Activated T-helper 1 cell treated with anti-CD3 and anti-CD28 coated beads, Interleukin-12 subunit alpha, Interleukin-12 subunit beta, Interleukin-2, Interleukin-4 antibody, amounts not matched to agents 30 ng/mL and 10 ng/mL and 1 ng/mL, durations not matched to agents 14 hours and 24 hours and 36 hours (primary cell): ENCODE measurements at regions of chr15 and their contacts with region 1.

Region 1: GRCh38 chr15:98421419-98422129 is 226.8 kb upstream of the IGF1R start:
- DNase-seq: peak; percentile 48
- H3K4me3 Mint-ChIP-seq: no peak overlapping the region
- H3K27ac Mint-ChIP-seq: no peak overlapping the region
- H3K4me1 Mint-ChIP-seq: no peaks in the 10 kb centered on the region
- H3K27me3 Mint-ChIP-seq: peaks cover 35% of the 10 kb centered on the region

Region 2: DNA sequence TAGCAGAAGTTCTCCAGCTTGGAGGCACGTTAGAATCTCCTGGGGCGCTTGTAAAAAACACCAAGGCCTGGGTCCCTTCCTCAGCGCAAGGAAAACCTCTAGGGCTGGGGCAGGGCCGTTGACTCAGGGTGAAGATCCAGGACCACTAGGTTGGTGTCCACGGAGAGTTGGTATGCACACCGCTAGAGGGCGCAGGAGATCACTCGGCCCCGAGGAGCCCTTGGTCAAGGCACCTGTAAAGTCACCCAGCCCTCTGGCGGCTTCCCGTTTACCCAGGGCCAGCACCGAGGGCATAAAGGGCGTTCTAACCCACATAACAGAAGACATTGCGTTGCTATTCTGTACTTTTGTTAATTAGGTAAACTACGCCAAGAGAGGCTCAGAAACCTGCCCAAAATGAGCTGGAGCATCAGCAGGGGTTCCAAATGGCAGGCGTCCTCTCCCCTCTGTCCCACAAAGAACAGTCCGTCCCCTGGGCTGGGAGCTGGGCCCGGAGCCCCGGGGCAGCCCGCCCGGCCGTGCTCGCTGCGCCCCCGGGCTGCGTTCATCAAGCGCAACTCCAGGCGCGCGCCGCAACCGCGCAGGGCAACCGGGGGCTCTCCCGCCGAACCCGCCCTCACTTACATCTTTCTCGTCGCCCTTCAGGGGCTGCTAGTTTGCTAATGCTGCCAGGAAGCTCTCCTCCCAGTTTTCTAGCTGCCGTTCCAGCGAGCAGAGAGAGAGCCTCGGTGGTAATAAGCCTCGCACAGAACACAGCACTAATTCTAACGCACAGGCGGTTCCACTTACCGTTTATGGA is 128.9 kb before region 1 on chr15:
- intact Hi-C with region 1: loop called (anchors 5 kb)
- DNase-seq: peak; percentile 2
- H3K4me3 Mint-ChIP-seq: no peak overlapping the region
- H3K27ac Mint-ChIP-seq: no peak overlapping the region
- H3K4me1 Mint-ChIP-seq: no peaks in the 10 kb centered on the region
- H3K27me3 Mint-ChIP-seq: peaks cover 20% of the 10 kb centered on the region

Region 3: DNA sequence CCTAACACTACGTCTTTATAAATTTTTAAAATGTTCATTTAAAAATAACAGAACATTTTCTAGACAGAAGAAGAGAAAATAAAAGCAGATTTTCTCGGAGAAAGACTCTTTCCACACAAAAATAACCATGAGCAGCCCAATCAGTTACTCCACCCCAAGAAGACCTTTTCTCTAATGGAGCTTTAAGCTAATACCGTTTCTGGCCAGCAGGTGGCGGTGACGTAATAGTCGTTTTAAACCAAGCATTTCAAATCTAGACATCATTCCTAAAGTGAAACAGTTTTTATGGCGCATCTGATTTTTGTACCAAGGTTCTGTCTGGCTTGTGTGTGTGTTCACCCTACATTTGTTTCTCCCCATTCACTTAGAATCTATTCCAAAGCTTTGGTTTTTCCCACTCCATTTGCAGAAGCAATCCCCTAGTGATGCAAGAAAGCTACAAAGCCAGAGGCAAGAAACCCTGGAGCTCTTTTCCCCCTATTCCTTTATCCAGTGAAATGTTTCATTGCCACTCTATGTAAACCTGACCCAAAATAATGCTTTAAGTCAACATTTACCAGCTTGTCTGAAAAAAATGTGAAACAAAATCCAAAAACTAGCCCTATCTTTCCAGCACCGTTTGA is 109.9 kb before region 1 on chr15:
- intact Hi-C with region 1: loop called (anchors 1 kb)
- DNase-seq: peak; percentile 56
- H3K4me3 Mint-ChIP-seq: no peak overlapping the region
- H3K27ac Mint-ChIP-seq: no peak overlapping the region
- H3K4me1 Mint-ChIP-seq: no peaks in the 10 kb centered on the region
- H3K27me3 Mint-ChIP-seq: peaks cover 4% of the 10 kb centered on the region